CD8-positive, alpha-beta T cell (primary cell): ENCODE measurements at regions of chr10 and their contacts with region 1.

Region 1: GRCh38 chr10:22308390-22308789 is 7.8 kb upstream of the COMMD3 start:
- DNase-seq: no peak
- ATAC-seq: no peak
- H3K4me3 ChIP-seq: no peak overlapping the region
- H3K4me3 Mint-ChIP-seq: no peak overlapping the region
- H3K27ac ChIP-seq: no peak overlapping the region
- H3K27ac Mint-ChIP-seq: no peak overlapping the region
- H3K4me1 ChIP-seq: no peaks in the 10 kb centered on the region
- H3K4me1 Mint-ChIP-seq: no peaks in the 10 kb centered on the region
- H3K27me3 ChIP-seq: peaks cover 0 to 7% of the 10 kb centered on the region in 2 experiments
- H3K27me3 Mint-ChIP-seq: peaks cover 16% of the 10 kb centered on the region
- CTCF ChIP-seq: no peak

Region 2: GRCh38 chr10:22356333-22356873 is 48.0 kb after region 1 on chr10:
- CTCF ChIA-PET with region 1: no interaction called
- POLR2A ChIA-PET with region 1: no interaction called
- intact Hi-C with region 1: loop called in 1 of 2 experiments (anchors 10 kb)
- DNase-seq: no peak
- ATAC-seq: no peak
- H3K4me3 ChIP-seq: no peak overlapping the region
- H3K4me3 Mint-ChIP-seq: no peak overlapping the region
- H3K27ac ChIP-seq: no peak overlapping the region
- H3K27ac Mint-ChIP-seq: no peak overlapping the region
- H3K4me1 ChIP-seq: no peaks in the 10 kb centered on the region
- H3K4me1 Mint-ChIP-seq: no peaks in the 10 kb centered on the region
- H3K27me3 ChIP-seq: no peaks in the 10 kb centered on the region
- H3K27me3 Mint-ChIP-seq: peaks cover 7% of the 10 kb centered on the region
- CTCF ChIP-seq: no peak